Heart right ventricle (tissue), 16 donors: ENCODE measurements at regions of chr7 and their contacts with region 1.

Region 1: DNA sequence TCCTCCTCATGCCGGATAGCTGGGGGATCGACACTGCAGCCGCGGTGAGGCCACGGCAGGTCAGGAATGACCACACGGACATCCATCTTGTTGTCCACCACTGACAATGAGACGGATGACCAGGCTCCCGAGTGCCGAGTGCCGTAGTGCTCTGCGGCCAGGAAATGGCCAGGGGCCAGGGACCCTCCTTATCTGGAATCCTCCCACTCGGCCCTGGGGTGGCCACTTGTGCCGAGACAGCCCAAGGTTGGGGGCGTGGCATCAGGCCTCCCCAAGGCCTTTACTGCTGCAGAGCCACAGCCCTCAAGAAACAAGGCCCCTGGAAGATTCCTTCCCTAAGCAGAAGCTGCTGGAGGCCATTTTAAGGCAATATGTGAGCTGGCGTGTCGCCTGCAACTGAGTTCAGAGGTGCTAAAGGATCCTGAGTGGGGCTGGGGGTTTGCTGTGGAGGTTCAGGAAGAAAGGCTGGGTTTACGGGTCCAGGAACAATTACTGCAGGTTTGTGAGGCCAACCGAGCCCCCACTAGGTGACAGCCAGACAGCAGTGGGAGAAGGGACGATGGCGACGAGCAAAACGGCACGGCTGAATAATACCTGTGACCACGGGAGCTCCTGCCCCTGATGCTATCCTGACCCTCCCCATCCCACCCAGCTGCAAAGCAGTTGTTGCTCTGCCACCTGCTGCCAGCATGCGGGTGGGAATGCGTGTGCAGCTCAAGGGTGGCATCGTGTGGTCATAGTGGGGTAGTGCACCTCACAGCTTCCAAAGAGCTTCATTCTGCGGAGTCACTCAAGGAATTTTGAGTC is 31.6 kb upstream of the LEP start:
- DNase-seq: peak; percentile 51 to 62
- ATAC-seq: peak; percentile 73 to 88 (median 85)
- H3K4me3 ChIP-seq: no peak overlapping the region
- H3K27ac ChIP-seq: no peak overlapping the region
- H3K4me1 ChIP-seq: peaks cover 0 to 11% (median 0%) of the 10 kb centered on the region in 9 donors
- H3K27me3 ChIP-seq: peaks cover 0 to 86% (median 41%) of the 10 kb centered on the region in 7 donors
- CTCF ChIP-seq: peak; percentile 94 to 99 (median 98)

Region 2: DNA sequence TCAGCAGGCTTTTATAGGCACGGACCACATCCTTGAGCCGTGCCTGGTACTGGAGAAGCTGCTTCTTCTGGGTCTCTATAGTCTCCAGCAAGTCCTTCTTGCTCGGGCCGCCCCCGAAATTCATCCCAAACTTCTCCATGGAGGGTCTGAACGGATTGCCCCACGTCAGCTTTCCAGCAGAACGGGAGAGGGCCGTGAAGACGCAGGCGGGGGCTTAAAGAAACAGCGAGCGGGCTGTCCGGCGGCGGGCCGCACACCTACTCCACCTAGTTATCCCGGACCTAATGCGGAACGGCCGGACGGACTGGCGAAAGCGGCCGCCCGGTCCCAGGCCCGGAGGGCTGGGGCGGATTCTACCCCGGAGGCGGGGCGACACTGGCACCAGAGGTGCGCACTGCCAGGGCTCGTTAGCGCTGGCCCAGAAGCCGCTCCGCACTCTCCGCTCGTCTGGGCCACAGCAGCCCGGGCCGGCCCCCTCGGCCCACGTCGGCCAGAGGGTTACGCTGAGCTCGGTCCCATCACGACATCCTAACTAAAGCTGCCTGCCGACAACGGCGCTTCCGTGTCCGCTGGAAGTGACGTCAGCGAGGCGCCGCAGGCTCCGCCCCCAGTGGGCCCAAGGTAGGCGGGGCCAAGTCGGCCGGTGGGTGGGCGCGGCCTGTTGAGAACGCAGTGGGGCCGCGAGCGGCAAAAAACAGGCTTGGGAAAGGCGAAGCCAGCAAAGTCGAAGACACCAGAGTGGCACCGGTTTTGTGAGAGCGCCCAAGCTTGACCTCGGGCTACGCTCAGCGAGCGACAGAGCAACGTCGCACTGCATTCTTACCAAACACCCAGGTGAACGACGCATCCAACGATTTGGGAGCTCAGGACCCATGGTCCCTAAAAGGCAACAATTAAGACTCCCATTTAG is 624.1 kb before region 1 on chr7 and contains the start of gene GCC1:
- intact Hi-C with region 1: loop called in 1 of 10 experiments (anchors 10 kb)
- DNase-seq: peak; percentile 93 to 95
- ATAC-seq: peak; percentile 85 to 93 (median 90)
- H3K4me3 ChIP-seq: peak within 1 kb of the TSS; percentile 74 to 97 (median 86)
- H3K27ac ChIP-seq: peak within 1 kb of the TSS; percentile 55 to 95 (median 85)
- H3K4me1 ChIP-seq: peaks cover 19 to 80% (median 67%) of the 10 kb centered on the region in 9 donors
- H3K27me3 ChIP-seq: no peaks in the 10 kb centered on the region
- CTCF ChIP-seq: no peak
- total RNA-seq, gene GCC1: 5.7 to 8.9 (median 7.1) TPM

Region 3: GRCh38 chr7:128031901-128032604 is 177.4 kb before region 1 on chr7:
- intact Hi-C with region 1: loop called in 6 of 10 experiments (anchors 2 to 10 kb)
- DNase-seq: peak; percentile 51
- ATAC-seq: peak; percentile 59 to 84 (median 68)
- H3K4me3 ChIP-seq: peak overlapping the region; percentile 25 to 71 (median 60)
- H3K27ac ChIP-seq: peak overlapping the region in 7 of 10 donors; percentile 30 to 77 (median 50)
- H3K4me1 ChIP-seq: peaks cover 3 to 32% (median 18%) of the 10 kb centered on the region in 9 donors
- H3K27me3 ChIP-seq: no peaks in the 10 kb centered on the region
- CTCF ChIP-seq: peak in 5 of 9 donors; percentile 10 to 46 (median 45)

Region 4: GRCh38 chr7:128053023-128053422 is 156.4 kb before region 1 on chr7:
- intact Hi-C with region 1: loop called in 2 of 10 experiments (anchors 10 kb)
- DNase-seq: no peak
- ATAC-seq: peak in 2 of 8 donors; percentile 24 to 35
- H3K4me3 ChIP-seq: no peak overlapping the region
- H3K27ac ChIP-seq: no peak overlapping the region
- H3K4me1 ChIP-seq: peaks cover 0 to 14% (median 9%) of the 10 kb centered on the region in 9 donors
- H3K27me3 ChIP-seq: no peaks in the 10 kb centered on the region
- CTCF ChIP-seq: no peak